ENCODE measurements at regions of chrX and their contacts with region 1.

Region 1: GRCh38 chrX:34197946-34198345 is 65.8 kb upstream of the FAM47A start:
- DNase-seq: no peak
- H3K4me3 ChIP-seq: no peak overlapping the region
- CTCF ChIP-seq: no peak
- POLR2A ChIP-seq: no peak

Region 2: GRCh38 chrX:33784548-33784947 is 413.4 kb before region 1 on chrX:
- intact Hi-C with region 1: loop called (anchors 5 kb)
- DNase-seq: no peak
- H3K4me3 ChIP-seq: no peak overlapping the region
- CTCF ChIP-seq: no peak
- POLR2A ChIP-seq: no peak

Region 3: DNA sequence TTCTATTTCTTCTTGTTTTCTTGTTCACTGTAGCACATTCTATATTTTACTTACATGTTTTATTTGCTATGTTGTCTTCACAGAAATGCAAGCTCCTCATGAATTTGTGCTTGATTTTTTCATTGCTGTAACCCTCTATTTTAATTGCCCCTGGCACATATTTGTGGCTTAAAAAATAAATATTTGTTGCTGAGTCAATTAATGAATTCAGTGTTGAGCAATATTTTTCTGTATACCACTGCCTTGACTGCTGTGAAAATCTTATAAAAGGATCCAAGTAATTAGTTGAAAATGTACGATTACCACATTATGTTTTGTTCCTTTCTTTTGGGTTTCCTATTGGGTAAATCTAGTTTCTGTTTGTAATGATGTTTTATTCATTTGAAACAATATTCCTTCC is 134.3 kb before region 1 on chrX:
- intact Hi-C with region 1: no loop called
- DNase-seq: no peak
- H3K4me3 ChIP-seq: no peak overlapping the region
- CTCF ChIP-seq: no peak
- POLR2A ChIP-seq: no peak

Region 4: DNA sequence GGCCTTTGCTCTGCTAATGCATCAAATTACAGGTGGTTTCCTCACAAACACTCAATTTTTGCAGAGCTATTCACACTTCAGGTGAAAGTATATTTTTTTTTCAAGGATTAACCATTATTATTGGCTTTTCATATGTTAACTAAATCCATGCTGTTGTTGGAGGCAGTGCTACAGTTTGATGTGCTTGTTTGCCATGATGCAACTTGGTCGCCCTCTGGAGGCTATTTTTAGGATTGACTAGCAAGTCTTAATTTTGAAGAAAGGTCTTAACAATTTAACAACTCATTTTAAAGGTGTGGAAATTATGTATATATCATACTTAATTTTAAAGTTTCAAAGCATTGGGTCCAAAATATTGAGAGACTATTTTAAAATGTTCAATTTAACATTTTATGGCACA is 102.9 kb after region 1 on chrX:
- intact Hi-C with region 1: no loop called
- DNase-seq: no peak
- H3K4me3 ChIP-seq: no peak overlapping the region
- CTCF ChIP-seq: no peak
- POLR2A ChIP-seq: no peak